ENCODE measurements at regions of chr3 and their contacts with region 1.

Region 1: DNA sequence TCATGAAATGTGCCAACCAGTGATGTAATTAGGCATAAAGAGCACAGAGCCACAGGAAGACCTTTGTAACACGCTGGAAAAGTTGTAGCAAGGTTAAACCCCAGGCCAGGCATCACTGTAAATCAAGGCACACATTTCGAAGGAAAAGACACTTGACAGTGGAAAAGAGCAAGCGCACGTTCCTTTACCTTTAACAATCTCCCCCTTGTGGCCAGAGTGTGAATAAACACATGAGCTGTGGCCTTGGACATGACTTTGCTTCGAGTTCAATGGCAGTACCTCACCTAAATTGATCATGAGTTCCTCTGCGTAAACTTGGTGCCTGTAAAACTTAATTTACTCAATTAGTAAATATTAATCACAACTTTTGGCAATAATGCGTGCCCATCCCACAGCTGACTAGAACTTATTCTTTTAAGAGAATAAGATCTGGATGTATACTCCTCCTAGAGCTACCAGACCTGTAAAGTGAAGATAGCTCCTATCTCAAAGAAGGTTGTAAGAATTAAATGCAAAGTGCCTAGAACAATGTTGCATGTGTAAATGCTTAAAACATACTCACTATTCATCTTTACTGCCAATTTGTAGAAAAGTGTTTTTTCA is 757.0 kb upstream of the NECTIN3 start:
- DNase-seq: peak; percentile 72
- ATAC-seq: peak; percentile 88
- H3K4me3 ChIP-seq: no peak overlapping the region
- H3K27ac ChIP-seq: no peak overlapping the region
- H3K4me1 ChIP-seq: peaks cover 0 to 8% of the 10 kb centered on the region in 2 experiments; a peak in 1 of 4 replicates
- H3K27me3 ChIP-seq: no peaks in the 10 kb centered on the region
- CTCF ChIP-seq: peak; percentile 36 to 75 (median 74); a peak in 5 of 6 replicates
- POLR2A ChIP-seq: no peak
- RAD21 ChIP-seq: peak; percentile 67

Region 2: DNA sequence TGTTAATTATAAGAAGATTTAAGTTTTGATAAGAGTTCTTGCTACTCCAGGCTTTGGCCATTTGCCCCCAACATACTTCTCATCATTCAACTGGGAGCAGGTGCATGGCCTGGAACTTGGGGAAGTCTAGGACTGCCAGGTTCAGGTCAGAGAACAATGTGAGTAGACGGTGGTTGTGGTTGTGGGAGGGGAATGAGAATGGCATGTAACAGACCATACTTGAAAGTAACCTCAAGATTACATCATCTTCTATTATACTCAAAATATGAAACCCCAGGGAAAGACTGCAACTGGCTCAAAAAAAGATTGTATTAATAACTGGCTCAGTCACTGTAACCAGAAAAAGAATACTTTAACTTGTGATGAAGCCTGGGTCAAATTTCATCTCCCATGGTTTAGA is 612.4 kb before region 1 on chr3:
- CTCF ChIA-PET with region 1: no interaction called
- POLR2A ChIA-PET with region 1: no interaction called
- RAD21 ChIA-PET with region 1: no interaction called
- intact Hi-C with region 1: no loop called
- DNase-seq: no peak
- ATAC-seq: peak; percentile 54
- H3K4me3 ChIP-seq: no peak overlapping the region
- H3K27ac ChIP-seq: no peak overlapping the region
- H3K4me1 ChIP-seq: peaks cover 4 to 7% of the 10 kb centered on the region in 2 experiments; a peak in 2 of 4 replicates
- H3K27me3 ChIP-seq: no peaks in the 10 kb centered on the region
- CTCF ChIP-seq: no peak
- POLR2A ChIP-seq: no peak
- RAD21 ChIP-seq: no peak

Region 3: DNA sequence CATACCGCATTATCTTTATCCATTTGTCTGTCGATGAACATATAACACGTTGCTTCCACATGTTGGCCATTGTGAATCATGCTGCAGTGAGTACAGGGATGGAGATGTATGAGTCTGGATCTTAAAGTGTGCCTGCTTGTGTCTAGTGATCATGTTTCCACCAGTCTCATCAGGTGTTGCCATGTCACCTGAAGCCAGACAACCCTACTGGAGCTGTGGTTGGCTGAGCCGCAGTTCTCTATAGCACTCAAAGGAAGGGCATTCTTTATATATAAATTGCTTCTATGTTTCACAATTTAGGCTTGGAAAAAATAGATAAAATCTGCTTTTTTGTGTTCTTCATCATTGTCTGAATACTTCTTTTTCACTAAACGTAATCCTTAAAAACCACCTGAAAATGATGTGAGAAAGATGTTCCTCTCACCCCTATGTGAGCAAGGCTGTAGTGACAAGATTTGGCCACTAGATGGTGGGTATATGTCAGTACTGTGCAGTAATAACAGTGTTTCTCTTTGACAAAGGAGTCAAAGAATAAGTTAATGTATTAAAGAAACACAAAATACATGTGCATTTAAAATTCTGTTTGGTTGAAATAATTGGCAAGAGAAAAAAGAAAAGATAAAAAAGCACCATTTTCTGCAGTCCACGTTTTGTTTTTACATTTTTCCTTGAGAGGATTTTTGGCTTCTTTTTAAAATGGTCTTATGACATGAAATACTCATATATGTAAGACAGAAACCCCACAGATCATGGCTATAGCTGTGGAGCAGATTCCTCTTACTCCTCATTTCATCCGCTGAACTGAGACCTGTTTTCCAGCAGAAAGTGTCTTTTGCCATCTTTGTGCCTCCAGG is 582.8 kb before region 1 on chr3:
- CTCF ChIA-PET with region 1: no interaction called
- POLR2A ChIA-PET with region 1: no interaction called
- RAD21 ChIA-PET with region 1: no interaction called
- intact Hi-C with region 1: loop called (anchors 2 kb)
- DNase-seq: peak; percentile 29
- ATAC-seq: peak; percentile 85; the same call in 1 of the 2 replicates
- H3K4me3 ChIP-seq: no peak overlapping the region
- H3K27ac ChIP-seq: no peak overlapping the region
- H3K4me1 ChIP-seq: peaks cover 0 to 12% of the 10 kb centered on the region in 2 experiments; a peak in 2 of 4 replicates
- H3K27me3 ChIP-seq: no peaks in the 10 kb centered on the region
- CTCF ChIP-seq: peak; percentile 51 to 91 (median 85); a peak in 5 of 6 replicates
- POLR2A ChIP-seq: no peak
- RAD21 ChIP-seq: peak; percentile 86

Region 4: GRCh38 chr3:110598847-110599490 is 284.4 kb after region 1 on chr3:
- CTCF ChIA-PET with region 1: no interaction called
- POLR2A ChIA-PET with region 1: no interaction called
- RAD21 ChIA-PET with region 1: no interaction called
- intact Hi-C with region 1: no loop called
- DNase-seq: no peak
- ATAC-seq: no peak
- H3K4me3 ChIP-seq: no peak overlapping the region
- H3K27ac ChIP-seq: no peak overlapping the region
- H3K4me1 ChIP-seq: no peaks in the 10 kb centered on the region
- H3K27me3 ChIP-seq: no peaks in the 10 kb centered on the region
- CTCF ChIP-seq: no peak
- POLR2A ChIP-seq: no peak
- RAD21 ChIP-seq: no peak